ENCODE measurements at regions of chr22 and their contacts with region 1.

Region 1: DNA sequence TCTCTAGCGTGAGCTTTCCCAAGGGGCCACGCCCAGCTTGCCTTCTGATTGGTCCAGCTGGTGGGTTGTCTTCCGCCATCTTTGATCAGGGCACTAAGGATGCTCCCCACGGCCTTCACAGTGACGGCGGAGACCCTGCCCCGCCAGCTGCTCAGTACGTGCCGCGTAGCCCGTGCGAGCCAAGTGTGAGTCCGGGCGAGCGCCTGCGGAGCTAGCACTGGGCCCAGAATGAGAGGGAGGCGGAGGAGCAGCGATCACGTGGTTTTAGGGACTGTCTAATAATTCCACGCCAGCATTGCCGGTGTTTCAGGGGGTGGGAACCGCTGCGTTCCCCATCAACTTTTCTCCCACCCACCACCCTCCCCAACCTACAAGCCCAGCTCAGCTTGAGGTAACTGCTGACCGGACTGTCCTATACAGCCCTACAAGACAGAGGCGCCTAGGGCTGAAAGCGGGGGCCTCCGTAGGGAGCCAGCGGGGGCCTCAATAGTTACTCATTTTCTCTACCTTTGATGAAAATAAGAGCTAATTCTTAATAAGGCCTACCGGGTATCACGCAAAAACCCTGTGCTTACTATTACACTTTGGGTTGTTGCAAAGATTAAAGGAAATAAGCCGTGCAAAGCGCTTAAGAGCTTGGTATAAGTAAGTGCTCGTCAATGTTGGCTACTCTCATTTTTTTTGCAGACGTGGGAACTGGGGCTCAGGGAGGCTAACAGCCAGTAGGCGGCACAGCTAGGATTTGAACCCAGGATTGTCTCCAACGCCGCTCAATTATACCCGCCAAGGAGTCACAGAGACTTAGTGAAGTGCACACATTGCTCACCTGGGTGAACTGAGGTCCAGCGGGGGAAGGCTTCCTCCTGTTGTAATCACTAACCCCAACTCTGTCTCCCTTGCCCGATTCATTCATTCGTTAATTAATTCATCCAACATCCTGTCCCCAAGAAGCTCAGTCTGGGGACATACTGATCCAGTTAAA is 1.3 kb upstream of the MTFP1 start:
- DNase-seq: peak; percentile 94 to 100 (median 98)
- ATAC-seq: peak; percentile 84
- H3K4me3 ChIP-seq: peak overlapping the region; percentile 74
- H3K4me3 Mint-ChIP-seq: peak overlapping the region; percentile 99
- H3K27ac ChIP-seq: peak overlapping the region; percentile 86 to 87
- H3K27ac Mint-ChIP-seq: peak overlapping the region; percentile 98
- H3K4me1 ChIP-seq: peaks cover 53% of the 10 kb centered on the region
- H3K4me1 Mint-ChIP-seq: peaks cover 55% of the 10 kb centered on the region
- H3K27me3 ChIP-seq: no peaks in the 10 kb centered on the region
- H3K27me3 Mint-ChIP-seq: no peaks in the 10 kb centered on the region
- CTCF ChIP-seq: no peak

Region 2: DNA sequence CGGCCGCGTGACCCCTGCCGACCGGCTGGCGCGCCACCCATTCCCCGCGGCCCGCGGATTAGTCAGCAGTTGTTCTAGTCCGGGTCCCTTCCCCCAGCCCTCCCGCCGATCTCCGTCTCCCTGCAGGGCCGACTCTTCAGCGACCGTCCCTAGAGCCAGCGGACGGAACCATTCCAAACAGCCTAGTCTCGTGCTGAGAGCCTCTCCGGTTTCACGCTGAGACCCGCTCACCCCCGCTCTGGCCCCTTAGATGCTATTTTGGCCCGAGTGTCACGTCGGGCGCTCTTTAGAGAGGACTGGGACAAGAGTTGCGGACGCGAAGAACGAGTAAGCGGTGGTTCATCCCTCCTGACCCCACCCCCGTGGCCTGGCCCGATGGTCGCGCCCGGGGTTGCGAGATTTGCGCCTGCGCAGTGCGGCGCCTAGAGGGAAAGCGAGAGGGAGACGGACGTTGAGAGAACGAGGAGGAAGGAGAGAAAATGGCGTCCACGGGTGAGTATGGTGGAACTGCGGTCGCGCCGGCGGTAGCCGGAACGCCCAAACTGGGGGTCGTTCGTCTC is 1156.3 kb before region 1 on chr22 and contains the starts of genes EWSR1 and RHBDD3:
- CTCF ChIA-PET with region 1: no interaction called
- POLR2A ChIA-PET with region 1: interaction called, 3 read pairs
- intact Hi-C with region 1: loop called in 1 of 2 experiments (anchors 2 kb)
- DNase-seq: peak; percentile 92 to 98 (median 96)
- ATAC-seq: peak; percentile 84
- H3K4me3 ChIP-seq: peak within 1 kb of the TSS; percentile 98
- H3K4me3 Mint-ChIP-seq: peak within 1 kb of the TSS; percentile 95
- H3K27ac ChIP-seq: peak within 1 kb of the TSS; percentile 96 to 97
- H3K27ac Mint-ChIP-seq: peak within 1 kb of the TSS; percentile 98
- H3K4me1 ChIP-seq: peaks cover 50% of the 10 kb centered on the region
- H3K4me1 Mint-ChIP-seq: peaks cover 64% of the 10 kb centered on the region
- H3K27me3 ChIP-seq: no peaks in the 10 kb centered on the region
- H3K27me3 Mint-ChIP-seq: no peaks in the 10 kb centered on the region
- CTCF ChIP-seq: no peak
- total RNA-seq, gene EWSR1: 292 to 309 TPM
- total RNA-seq, gene RHBDD3: 9.0 to 11.7 TPM

Region 3: DNA sequence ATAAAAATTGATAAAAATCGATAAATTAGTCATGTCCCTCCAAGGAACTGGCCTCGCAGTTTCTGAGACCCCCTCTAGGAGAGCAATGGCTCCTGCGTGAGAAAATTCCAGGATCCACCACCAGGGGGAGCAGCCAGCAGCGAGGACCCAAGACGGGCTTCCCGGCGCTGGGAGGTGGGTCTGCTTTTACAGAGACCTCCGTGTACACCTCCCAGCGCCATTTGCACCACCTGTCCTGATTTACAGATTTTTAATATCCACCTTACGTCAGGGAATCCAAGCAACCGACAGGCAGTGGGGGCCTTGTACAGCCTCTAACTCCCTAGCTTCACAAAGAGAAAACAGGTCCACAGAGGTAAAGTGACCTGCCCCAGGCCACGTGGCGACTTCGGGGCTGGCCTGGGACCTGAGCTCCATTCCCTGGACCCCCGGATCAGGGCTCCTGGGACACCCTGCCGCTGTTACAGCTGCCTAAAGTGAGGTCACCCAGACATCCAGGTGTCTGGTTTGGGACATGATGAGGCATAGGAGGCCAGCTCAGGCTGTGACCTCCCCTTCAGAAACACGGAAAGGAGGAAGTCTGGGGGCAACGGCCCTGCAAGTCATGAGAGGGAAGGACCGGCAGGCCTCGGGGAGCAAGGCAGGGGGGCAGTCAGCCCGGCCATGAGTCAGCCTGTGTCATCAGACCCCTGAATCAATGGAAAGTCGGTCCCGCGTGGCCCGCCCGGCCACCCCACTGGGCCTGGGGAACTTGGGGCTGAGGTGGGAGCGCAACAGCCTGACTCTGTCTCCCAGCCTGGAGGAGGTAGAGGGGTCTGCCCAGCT is 161.1 kb before region 1 on chr22:
- CTCF ChIA-PET with region 1: interaction called, 3 read pairs
- POLR2A ChIA-PET with region 1: no interaction called
- intact Hi-C with region 1: loop called in 1 of 2 experiments (anchors 2 kb)
- DNase-seq: peak; percentile 68 to 89 (median 76)
- ATAC-seq: no peak
- H3K4me3 ChIP-seq: peak overlapping the region; percentile 21
- H3K4me3 Mint-ChIP-seq: peak overlapping the region; percentile 81
- H3K27ac ChIP-seq: peak overlapping the region in 1 of 2 donors; percentile 14
- H3K27ac Mint-ChIP-seq: peak overlapping the region; percentile 81
- H3K4me1 ChIP-seq: peaks cover 60% of the 10 kb centered on the region
- H3K4me1 Mint-ChIP-seq: peaks cover 49% of the 10 kb centered on the region
- H3K27me3 ChIP-seq: no peaks in the 10 kb centered on the region
- H3K27me3 Mint-ChIP-seq: no peaks in the 10 kb centered on the region
- CTCF ChIP-seq: peak; percentile 100

Region 4: GRCh38 chr22:30326706-30327362 is 97.4 kb before region 1 on chr22 and contains the start of gene TBC1D10A:
- CTCF ChIA-PET with region 1: no interaction called
- POLR2A ChIA-PET with region 1: interaction called, 16 read pairs
- intact Hi-C with region 1: no loop called
- DNase-seq: peak; percentile 84 to 98 (median 94)
- ATAC-seq: peak; percentile 89
- H3K4me3 ChIP-seq: peak within 1 kb of the TSS; percentile 71
- H3K4me3 Mint-ChIP-seq: peak within 1 kb of the TSS; percentile 93
- H3K27ac ChIP-seq: peak within 1 kb of the TSS; percentile 63 to 74
- H3K27ac Mint-ChIP-seq: peak within 1 kb of the TSS; percentile 97
- H3K4me1 ChIP-seq: peaks cover 54% of the 10 kb centered on the region
- H3K4me1 Mint-ChIP-seq: peaks cover 51% of the 10 kb centered on the region
- H3K27me3 ChIP-seq: no peaks in the 10 kb centered on the region
- H3K27me3 Mint-ChIP-seq: no peaks in the 10 kb centered on the region
- CTCF ChIP-seq: no peak
- total RNA-seq, gene TBC1D10A: 38.9 to 41.8 TPM

Region 5: GRCh38 chr22:30396871-30397655 is 27.2 kb before region 1 on chr22 and contains the start of gene SEC14L2:
- CTCF ChIA-PET with region 1: interaction called, 63 read pairs
- POLR2A ChIA-PET with region 1: interaction called, 112 read pairs
- intact Hi-C with region 1: loop called (anchors 1 to 2 kb)
- DNase-seq: peak in 13 of 14 experiments; percentile 24 to 79 (median 54)
- ATAC-seq: peak; percentile 83
- H3K4me3 ChIP-seq: peak within 1 kb of the TSS; percentile 68
- H3K4me3 Mint-ChIP-seq: peak within 1 kb of the TSS; percentile 95
- H3K27ac ChIP-seq: no peak within 1 kb of the TSS
- H3K27ac Mint-ChIP-seq: peak within 1 kb of the TSS; percentile 82
- H3K4me1 ChIP-seq: peaks cover 50% of the 10 kb centered on the region
- H3K4me1 Mint-ChIP-seq: peaks cover 62% of the 10 kb centered on the region
- H3K27me3 ChIP-seq: peaks cover 0 to 2% of the 10 kb centered on the region in 2 experiments
- H3K27me3 Mint-ChIP-seq: no peaks in the 10 kb centered on the region
- CTCF ChIP-seq: no peak
- total RNA-seq, gene SEC14L2: 74.6 to 79.8 TPM

Region 6: GRCh38 chr22:30435674-30436126 is 11.4 kb after region 1 on chr22:
- CTCF ChIA-PET with region 1: interaction called, 12 read pairs
- POLR2A ChIA-PET with region 1: interaction called, 76 read pairs
- intact Hi-C with region 1: loop called in 1 of 2 experiments (anchors 1 kb)
- DNase-seq: peak; percentile 68 to 97 (median 80)
- ATAC-seq: peak; percentile 93
- H3K4me3 ChIP-seq: peak overlapping the region; percentile 44
- H3K4me3 Mint-ChIP-seq: peak overlapping the region; percentile 9
- H3K27ac ChIP-seq: peak overlapping the region; percentile 69 to 94
- H3K27ac Mint-ChIP-seq: peak overlapping the region; percentile 89
- H3K4me1 ChIP-seq: peaks cover 24% of the 10 kb centered on the region
- H3K4me1 Mint-ChIP-seq: peaks cover 25% of the 10 kb centered on the region
- H3K27me3 ChIP-seq: peaks cover 7 to 22% of the 10 kb centered on the region in 2 experiments
- H3K27me3 Mint-ChIP-seq: peaks cover 23% of the 10 kb centered on the region
- CTCF ChIP-seq: peak; percentile 52

Region 7: DNA sequence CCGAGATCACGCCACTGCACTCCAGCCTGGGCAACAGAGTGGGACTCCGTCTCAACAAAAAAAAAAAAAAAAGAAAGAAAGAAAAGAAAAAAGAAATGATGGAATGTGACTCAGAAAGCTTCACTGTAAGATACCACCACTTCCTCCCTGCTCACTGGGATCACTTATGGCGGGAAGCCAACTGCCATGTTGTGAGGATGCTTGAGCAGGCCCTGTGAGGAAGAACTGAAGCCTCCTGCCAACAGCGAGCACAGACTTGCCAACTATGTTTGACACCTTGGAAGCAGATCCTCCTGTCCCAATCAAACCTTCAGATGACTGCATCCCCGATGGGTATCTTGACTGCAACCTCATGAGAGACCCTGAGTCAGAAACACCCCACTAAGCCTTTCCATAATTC is 114.0 kb after region 1 on chr22:
- CTCF ChIA-PET with region 1: no interaction called
- POLR2A ChIA-PET with region 1: no interaction called
- intact Hi-C with region 1: no loop called
- DNase-seq: no peak
- ATAC-seq: no peak
- H3K4me3 ChIP-seq: no peak overlapping the region
- H3K4me3 Mint-ChIP-seq: no peak overlapping the region
- H3K27ac ChIP-seq: no peak overlapping the region
- H3K27ac Mint-ChIP-seq: no peak overlapping the region
- H3K4me1 ChIP-seq: peaks cover 7% of the 10 kb centered on the region
- H3K4me1 Mint-ChIP-seq: no peaks in the 10 kb centered on the region
- H3K27me3 ChIP-seq: peaks cover 18 to 26% of the 10 kb centered on the region in 2 experiments
- H3K27me3 Mint-ChIP-seq: peaks cover 37% of the 10 kb centered on the region
- CTCF ChIP-seq: no peak